ENCODE measurements at regions of chr9 and their contacts with region 1.

Region 1: GRCh38 chr9:84397151-84397728 is 56.7 kb upstream of the SLC28A3 start:
- DNase-seq: peak; percentile 43
- H3K4me3 ChIP-seq: no peak overlapping the region
- H3K27ac ChIP-seq: no peak overlapping the region
- H3K4me1 ChIP-seq: no peaks in the 10 kb centered on the region
- H3K27me3 ChIP-seq: no peaks in the 10 kb centered on the region
- CTCF ChIP-seq: peak; percentile 81 to 88

Region 2: GRCh38 chr9:84461540-84461939 is 64.3 kb after region 1 on chr9:
- CTCF ChIA-PET with region 1: interaction called, 4 read pairs
- dilution Hi-C with region 1: no loop called
- in situ Hi-C with region 1: no loop called
- intact Hi-C with region 1: loop called (anchors 2 kb)
- DNase-seq: no peak
- H3K4me3 ChIP-seq: no peak overlapping the region
- H3K27ac ChIP-seq: no peak overlapping the region
- H3K4me1 ChIP-seq: no peaks in the 10 kb centered on the region
- H3K27me3 ChIP-seq: no peaks in the 10 kb centered on the region
- CTCF ChIP-seq: peak in 1 of 2 donors; percentile 14

Region 3: GRCh38 chr9:84493284-84493947 is 96.2 kb after region 1 on chr9:
- CTCF ChIA-PET with region 1: no interaction called
- dilution Hi-C with region 1: no loop called
- in situ Hi-C with region 1: no loop called
- intact Hi-C with region 1: no loop called
- DNase-seq: no peak
- H3K4me3 ChIP-seq: no peak overlapping the region
- H3K27ac ChIP-seq: no peak overlapping the region
- H3K4me1 ChIP-seq: no peaks in the 10 kb centered on the region
- H3K27me3 ChIP-seq: no peaks in the 10 kb centered on the region
- CTCF ChIP-seq: peak in 1 of 2 donors; percentile 11

Region 4: GRCh38 chr9:84697509-84698114 is 300.4 kb after region 1 on chr9:
- CTCF ChIA-PET with region 1: interaction called, 3 read pairs
- dilution Hi-C with region 1: no loop called
- in situ Hi-C with region 1: no loop called
- intact Hi-C with region 1: loop called (anchors 2 kb)
- DNase-seq: peak; percentile 51
- H3K4me3 ChIP-seq: no peak overlapping the region
- H3K27ac ChIP-seq: no peak overlapping the region
- H3K4me1 ChIP-seq: peaks cover 4% of the 10 kb centered on the region
- H3K27me3 ChIP-seq: peaks cover 1% of the 10 kb centered on the region
- CTCF ChIP-seq: peak; percentile 78 to 94

Region 5: GRCh38 chr9:84932915-84933527 is 535.8 kb after region 1 on chr9:
- CTCF ChIA-PET with region 1: no interaction called
- dilution Hi-C with region 1: no loop called
- in situ Hi-C with region 1: loop called in 1 of 2 experiments (anchors 25 kb)
- intact Hi-C with region 1: no loop called
- DNase-seq: peak; percentile 27
- H3K4me3 ChIP-seq: no peak overlapping the region
- H3K27ac ChIP-seq: no peak overlapping the region
- H3K4me1 ChIP-seq: no peaks in the 10 kb centered on the region
- H3K27me3 ChIP-seq: no peaks in the 10 kb centered on the region
- CTCF ChIP-seq: peak; percentile 32 to 59

Region 6: GRCh38 chr9:85067792-85068191 is 670.6 kb after region 1 on chr9:
- CTCF ChIA-PET with region 1: no interaction called
- dilution Hi-C with region 1: no loop called
- in situ Hi-C with region 1: no loop called
- intact Hi-C with region 1: loop called (anchors 2 kb)
- DNase-seq: no peak
- H3K4me3 ChIP-seq: no peak overlapping the region
- H3K27ac ChIP-seq: no peak overlapping the region
- H3K4me1 ChIP-seq: no peaks in the 10 kb centered on the region
- H3K27me3 ChIP-seq: no peaks in the 10 kb centered on the region
- CTCF ChIP-seq: no peak

Region 7: DNA sequence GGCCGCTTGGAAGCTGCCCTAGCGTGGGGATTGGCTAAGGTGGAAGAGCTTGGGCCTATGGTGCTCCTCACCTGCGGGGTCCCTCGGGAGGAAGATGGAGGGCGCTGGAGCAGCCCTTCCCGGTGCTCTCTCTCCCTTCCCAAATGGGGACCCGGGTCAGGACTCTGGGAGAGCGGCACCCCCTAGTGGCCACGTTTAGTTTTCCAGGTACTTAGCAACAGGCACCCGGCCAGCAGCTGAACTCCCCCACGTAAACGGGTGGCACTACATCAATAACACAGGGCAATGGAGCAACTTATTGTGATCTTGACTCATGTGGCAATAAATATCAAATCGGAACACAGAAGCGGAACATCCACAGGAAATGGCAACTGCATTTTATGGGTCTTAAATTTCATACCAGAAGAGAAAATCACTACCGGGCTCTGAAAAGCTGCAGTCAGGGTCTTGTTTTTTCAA is 1027.9 kb after region 1 on chr9:
- CTCF ChIA-PET with region 1: interaction called, 6 read pairs
- dilution Hi-C with region 1: no loop called
- in situ Hi-C with region 1: no loop called
- intact Hi-C with region 1: loop called (anchors 1 kb)
- DNase-seq: peak; percentile 27
- H3K4me3 ChIP-seq: no peak overlapping the region
- H3K27ac ChIP-seq: no peak overlapping the region
- H3K4me1 ChIP-seq: no peaks in the 10 kb centered on the region
- H3K27me3 ChIP-seq: no peaks in the 10 kb centered on the region
- CTCF ChIP-seq: peak; percentile 62 to 79

Measured in mammary epithelial cell (primary cell).